ENCODE measurements at regions of chr2 and their contacts with region 1.

Region 1: GRCh38 chr2:196131384-196131937 is 39.9 kb downstream of the STK17B start:
- DNase-seq: peak; percentile 35
- H3K4me3 ChIP-seq: no peak overlapping the region
- H3K27ac ChIP-seq: no peak overlapping the region
- H3K4me1 ChIP-seq: no peaks in the 10 kb centered on the region
- H3K27me3 ChIP-seq: no peaks in the 10 kb centered on the region
- CTCF ChIP-seq: peak; percentile 57 to 59

Region 2: GRCh38 chr2:196113061-196113974 is 18.1 kb before region 1 on chr2:
- CTCF ChIA-PET with region 1: no interaction called
- dilution Hi-C with region 1: no loop called
- in situ Hi-C with region 1: no loop called
- intact Hi-C with region 1: no loop called
- DNase-seq: peak; percentile 27
- H3K4me3 ChIP-seq: no peak overlapping the region
- H3K27ac ChIP-seq: no peak overlapping the region
- H3K4me1 ChIP-seq: no peaks in the 10 kb centered on the region
- H3K27me3 ChIP-seq: no peaks in the 10 kb centered on the region
- CTCF ChIP-seq: no peak

Region 3: GRCh38 chr2:196337208-196337953 is 205.9 kb after region 1 on chr2:
- CTCF ChIA-PET with region 1: no interaction called
- dilution Hi-C with region 1: no loop called
- in situ Hi-C with region 1: no loop called
- intact Hi-C with region 1: loop called (anchors 1 kb)
- DNase-seq: peak; percentile 16
- H3K4me3 ChIP-seq: no peak overlapping the region
- H3K27ac ChIP-seq: no peak overlapping the region
- H3K4me1 ChIP-seq: no peaks in the 10 kb centered on the region
- H3K27me3 ChIP-seq: peaks cover 2% of the 10 kb centered on the region
- CTCF ChIP-seq: peak; percentile 25 to 57

Region 4: DNA sequence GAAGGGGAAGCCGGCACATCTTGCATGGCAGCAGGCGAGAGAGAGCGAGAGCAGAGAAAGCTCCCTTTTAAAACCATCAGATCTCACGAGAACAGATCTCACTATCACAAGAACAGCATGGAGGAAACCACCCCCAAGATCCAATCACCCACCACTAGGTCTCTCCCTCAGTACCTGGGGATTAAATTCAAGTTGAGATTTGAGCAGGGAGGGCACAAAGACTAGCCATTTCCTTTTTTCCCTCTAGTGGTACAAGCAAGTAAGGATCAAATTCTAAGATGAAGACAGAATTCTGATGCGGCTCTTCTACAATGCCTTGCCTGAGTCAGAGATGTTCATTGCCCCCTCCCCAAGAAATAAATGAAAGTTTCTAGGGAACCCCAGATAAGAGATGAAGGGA is 1224.7 kb after region 1 on chr2:
- CTCF ChIA-PET with region 1: no interaction called
- dilution Hi-C with region 1: no loop called
- in situ Hi-C with region 1: no loop called
- intact Hi-C with region 1: loop called (anchors 5 kb)
- DNase-seq: no peak
- H3K4me3 ChIP-seq: no peak overlapping the region
- H3K27ac ChIP-seq: no peak overlapping the region
- H3K4me1 ChIP-seq: no peaks in the 10 kb centered on the region
- H3K27me3 ChIP-seq: no peaks in the 10 kb centered on the region
- CTCF ChIP-seq: peak in 1 of 2 donors; percentile 35

Measured in mammary epithelial cell (primary cell).